OCI-LY7 (cell line): ENCODE measurements at regions of chr2 and their contacts with region 1.

Region 1: GRCh38 chr2:229888031-229888430 is 33.8 kb downstream of the TRIP12 start:
- DNase-seq: no peak
- H3K4me3 ChIP-seq: no peak overlapping the region
- H3K27ac ChIP-seq: no peak overlapping the region
- H3K4me1 ChIP-seq: no peaks in the 10 kb centered on the region
- CTCF ChIP-seq: no peak

Region 2: GRCh38 chr2:229571243-229571642 is 316.8 kb before region 1 on chr2:
- CTCF ChIA-PET with region 1: no interaction called
- POLR2A ChIA-PET with region 1: no interaction called
- intact Hi-C with region 1: no loop called
- DNase-seq: no peak
- H3K4me3 ChIP-seq: no peak overlapping the region
- H3K27ac ChIP-seq: no peak overlapping the region
- H3K4me1 ChIP-seq: no peaks in the 10 kb centered on the region
- CTCF ChIP-seq: no peak

Region 3: GRCh38 chr2:229875549-229875948 is 12.5 kb before region 1 on chr2:
- CTCF ChIA-PET with region 1: no interaction called
- POLR2A ChIA-PET with region 1: interaction called, 11 read pairs
- intact Hi-C with region 1: no loop called
- DNase-seq: no peak
- H3K4me3 ChIP-seq: no peak overlapping the region
- H3K27ac ChIP-seq: no peak overlapping the region
- H3K4me1 ChIP-seq: peaks cover 13% of the 10 kb centered on the region
- CTCF ChIP-seq: no peak

Region 4: GRCh38 chr2:230075988-230076631 is 188.1 kb after region 1 on chr2:
- CTCF ChIA-PET with region 1: no interaction called
- POLR2A ChIA-PET with region 1: no interaction called
- intact Hi-C with region 1: no loop called
- DNase-seq: no peak
- H3K4me3 ChIP-seq: no peak overlapping the region
- H3K27ac ChIP-seq: no peak overlapping the region
- H3K4me1 ChIP-seq: no peaks in the 10 kb centered on the region
- CTCF ChIP-seq: no peak

Region 5: GRCh38 chr2:230234845-230235244 is 346.8 kb after region 1 on chr2:
- CTCF ChIA-PET with region 1: no interaction called
- POLR2A ChIA-PET with region 1: no interaction called
- intact Hi-C with region 1: no loop called
- DNase-seq: no peak
- H3K4me3 ChIP-seq: no peak overlapping the region
- H3K27ac ChIP-seq: no peak overlapping the region
- H3K4me1 ChIP-seq: no peaks in the 10 kb centered on the region
- CTCF ChIP-seq: no peak